ENCODE measurements at regions of chr7 and their contacts with region 1.

Region 1: DNA sequence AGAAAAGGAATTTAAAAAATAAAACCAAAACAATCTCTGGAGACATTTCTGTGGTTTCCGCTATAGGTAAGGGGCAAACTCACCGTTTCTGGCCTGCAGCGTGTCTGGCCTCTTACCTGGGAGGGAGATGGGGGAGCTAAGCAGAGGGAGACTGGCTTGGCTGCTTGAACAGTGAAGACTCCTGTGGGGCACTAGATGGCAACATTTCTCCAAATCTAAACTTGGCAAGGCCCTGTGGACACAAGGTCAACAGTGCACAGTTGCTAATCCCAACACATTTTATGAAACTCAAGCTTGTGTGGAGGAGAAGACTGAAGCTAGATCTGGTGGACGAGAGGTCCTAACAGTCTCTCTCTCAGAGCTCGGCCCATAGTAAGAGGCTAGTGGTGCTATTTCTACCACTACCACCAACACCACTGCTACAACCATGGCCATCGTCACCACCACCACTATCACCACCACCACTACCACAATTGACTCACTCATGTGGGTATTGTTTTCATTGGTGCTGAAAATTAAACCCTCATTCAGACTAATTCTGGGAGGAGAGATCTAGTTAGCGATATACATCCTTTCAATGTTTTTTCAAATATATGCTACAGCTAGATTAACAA is 28.4 kb upstream of the CDHR3 start:
- DNase-seq: peak in 1 of 5 donors; percentile 26
- ATAC-seq: peak; percentile 82 to 87 (median 84)
- H3K4me3 ChIP-seq: no peak overlapping the region
- H3K27ac ChIP-seq: peak overlapping the region in 1 of 12 donors; percentile 77
- H3K4me1 ChIP-seq: peaks cover 0 to 16% (median 2%) of the 10 kb centered on the region in 12 donors
- H3K27me3 ChIP-seq: no peaks in the 10 kb centered on the region
- CTCF ChIP-seq: peak in 11 of 12 donors; percentile 14 to 56 (median 36)
- POLR2A ChIP-seq: no peak

Region 2: DNA sequence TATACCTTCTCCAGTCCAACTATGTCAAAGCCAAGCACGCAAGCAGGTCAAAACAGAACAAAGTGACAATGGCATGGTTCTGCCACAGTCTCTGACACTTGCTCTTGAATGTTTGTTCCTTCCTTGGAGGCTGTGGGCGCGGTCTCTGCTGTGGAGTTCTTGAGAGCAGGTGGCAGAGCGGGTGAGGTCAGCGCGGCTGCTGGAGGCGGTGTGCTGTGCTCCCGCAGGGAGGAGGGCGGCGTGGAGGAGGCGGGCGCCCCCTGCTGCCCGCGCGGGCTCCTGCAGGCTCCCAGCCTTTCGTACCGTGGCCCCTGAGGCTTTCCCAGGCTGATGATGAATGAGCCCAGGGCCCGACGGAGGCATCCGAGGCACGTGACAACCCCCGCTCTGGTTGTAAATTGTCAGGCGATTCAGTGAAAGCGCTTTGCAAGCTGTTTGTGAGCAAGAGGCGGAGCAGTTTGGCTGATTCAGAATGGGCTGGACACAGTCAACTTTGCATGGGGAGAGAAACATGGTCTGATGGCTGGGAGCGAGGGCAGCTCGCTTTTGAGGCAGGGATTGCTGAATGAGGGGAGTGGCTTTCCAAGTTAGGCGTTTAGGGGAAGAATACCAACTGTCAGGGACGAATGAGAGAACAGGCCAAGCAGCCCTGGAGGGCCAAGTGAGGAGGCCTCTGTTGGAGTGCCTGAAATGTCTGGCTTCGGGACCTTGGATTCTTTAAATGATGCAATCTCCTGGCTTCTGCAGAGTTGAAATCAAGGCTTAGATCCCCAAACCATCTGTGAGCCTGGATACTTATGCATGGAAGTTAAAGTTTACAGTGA is 74.9 kb after region 1 on chr7:
- intact Hi-C with region 1: loop called in 7 of 10 experiments (anchors 1 to 5 kb)
- DNase-seq: peak; percentile 60 to 90 (median 76)
- ATAC-seq: peak; percentile 83 to 99 (median 95)
- H3K4me3 ChIP-seq: peak overlapping the region in 4 of 12 donors; percentile 5 to 22 (median 22)
- H3K27ac ChIP-seq: peak overlapping the region in 3 of 12 donors; percentile 17 to 53 (median 17)
- H3K4me1 ChIP-seq: peaks cover 0 to 15% (median 2%) of the 10 kb centered on the region in 12 donors
- H3K27me3 ChIP-seq: no peaks in the 10 kb centered on the region
- CTCF ChIP-seq: peak; percentile 89 to 98 (median 95)
- POLR2A ChIP-seq: peak in 1 of 2 donors; percentile 22

Region 3: DNA sequence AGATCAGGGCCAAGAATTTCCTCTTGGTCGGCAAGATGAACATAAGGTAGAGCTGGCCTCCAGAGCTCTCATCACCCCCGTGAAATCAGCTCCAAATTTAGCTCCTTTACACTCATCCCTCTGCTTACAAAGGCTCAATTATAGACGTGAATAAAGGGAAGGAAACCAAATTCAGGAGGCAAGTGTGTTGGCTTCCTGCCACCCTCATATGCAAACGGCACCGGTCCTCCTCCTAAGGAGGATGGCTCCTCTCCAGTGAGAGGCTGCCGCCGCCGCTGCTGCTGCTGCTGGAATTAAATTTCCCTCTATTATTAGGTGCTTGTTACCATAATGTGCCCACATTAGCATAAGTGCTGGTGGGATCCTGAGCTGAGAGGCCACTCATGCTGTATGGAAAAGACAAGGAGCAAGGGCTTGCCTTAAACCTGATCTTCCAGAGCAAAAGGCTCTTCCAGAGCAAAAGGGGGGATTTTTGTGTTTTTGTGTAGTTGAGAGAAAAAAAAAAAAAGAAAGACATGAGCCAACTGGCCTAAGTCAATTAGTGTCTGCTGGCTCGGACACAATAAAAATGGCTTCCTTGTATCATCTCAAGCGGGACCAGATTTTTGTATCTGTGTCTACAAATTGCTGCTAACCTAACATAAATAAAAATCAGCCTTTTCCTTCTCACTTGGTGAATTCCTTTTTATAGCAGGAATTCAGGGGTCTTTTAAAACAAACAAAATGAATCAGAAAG is 96.8 kb after region 1 on chr7:
- intact Hi-C with region 1: loop called in 1 of 10 experiments (anchors 10 kb)
- DNase-seq: no peak
- ATAC-seq: peak in 2 of 4 donors; percentile 22 to 45
- H3K4me3 ChIP-seq: no peak overlapping the region
- H3K27ac ChIP-seq: no peak overlapping the region
- H3K4me1 ChIP-seq: peaks cover 0 to 11% (median 6%) of the 10 kb centered on the region in 12 donors
- H3K27me3 ChIP-seq: peaks cover 0 to 4% (median 0%) of the 10 kb centered on the region in 9 donors
- CTCF ChIP-seq: no peak
- POLR2A ChIP-seq: no peak

Region 4: DNA sequence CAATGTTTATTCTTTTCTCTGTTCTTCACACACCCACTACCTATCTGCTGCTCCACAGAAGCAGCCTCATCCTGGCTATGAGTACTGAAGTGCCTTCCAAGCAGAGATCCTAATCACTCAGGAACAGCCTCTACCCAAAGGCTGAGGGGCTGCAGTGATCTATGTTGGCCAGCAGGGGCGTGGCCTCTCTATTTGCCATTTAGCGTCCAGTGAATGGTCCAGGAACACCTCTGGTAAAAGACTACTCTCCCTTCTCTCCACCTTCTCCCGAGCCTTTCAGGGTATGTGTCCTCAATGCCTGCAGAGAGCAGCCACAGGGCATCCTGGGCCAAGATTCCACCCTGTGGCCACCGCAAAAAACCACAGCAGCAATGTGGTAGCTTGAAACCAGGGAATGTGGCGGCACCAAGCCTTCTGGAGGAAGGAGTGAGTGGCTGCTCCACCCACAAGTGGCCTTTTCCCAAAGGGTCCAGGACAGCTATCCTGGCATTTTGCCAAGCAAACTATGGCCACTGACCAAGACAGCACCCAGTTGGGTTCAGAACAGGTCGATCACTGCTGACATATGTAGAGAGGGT is 106.5 kb after region 1 on chr7:
- intact Hi-C with region 1: loop called in 6 of 10 experiments (anchors 1 to 10 kb)
- DNase-seq: no peak
- ATAC-seq: peak in 3 of 4 donors; percentile 7 to 23 (median 15)
- H3K4me3 ChIP-seq: no peak overlapping the region
- H3K27ac ChIP-seq: no peak overlapping the region
- H3K4me1 ChIP-seq: peaks cover 0 to 14% (median 4%) of the 10 kb centered on the region in 12 donors
- H3K27me3 ChIP-seq: peaks cover 0 to 3% (median 0%) of the 10 kb centered on the region in 9 donors
- CTCF ChIP-seq: peak; percentile 49 to 79 (median 62)
- POLR2A ChIP-seq: no peak